Right cardiac atrium (tissue), 5 donors: ENCODE measurements at regions of chr17 and their contacts with region 1.

Region 1: DNA sequence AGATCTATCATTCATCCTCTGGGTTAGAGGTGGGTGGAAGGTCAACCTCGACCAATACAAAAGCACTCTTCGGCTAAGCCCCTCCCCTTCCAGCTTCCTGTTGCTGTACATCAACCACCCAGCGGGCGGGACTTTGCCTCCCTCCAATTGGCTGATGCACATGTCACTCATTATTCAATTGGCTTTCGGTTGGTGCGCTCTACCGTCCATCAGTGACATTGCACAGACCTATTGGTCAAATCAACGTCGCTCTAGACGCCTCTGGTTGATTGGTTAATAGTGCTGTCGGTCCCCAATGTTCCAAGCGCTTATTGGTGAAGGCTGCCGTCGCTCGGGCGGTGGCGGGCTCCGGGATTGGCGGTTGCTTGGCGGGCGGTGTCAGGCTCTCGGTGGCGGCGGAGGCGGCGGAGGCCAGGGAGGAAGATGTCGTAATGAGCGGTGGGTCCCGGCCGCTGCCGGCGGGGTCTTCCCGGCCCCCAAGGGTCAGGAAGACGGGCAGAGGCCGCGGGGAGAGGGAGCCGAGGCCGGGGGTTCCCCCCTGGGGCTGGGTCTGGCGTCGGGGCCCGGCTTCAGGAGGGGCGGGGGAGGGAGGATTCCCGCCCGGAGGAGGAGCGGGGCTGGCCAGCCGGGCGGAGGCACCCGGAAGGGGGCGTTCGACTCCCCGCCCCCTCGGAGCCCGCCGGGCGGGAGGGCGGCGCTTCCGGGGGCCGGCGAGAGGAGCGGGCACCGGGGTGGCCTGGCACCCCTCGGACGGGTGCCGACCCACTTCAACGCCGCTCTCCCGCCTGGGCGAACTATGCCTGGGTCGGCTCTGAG is at the start of gene SP2:
- DNase-seq: peak; percentile 98 to 99 (median 99)
- ATAC-seq: peak; percentile 97
- H3K4me3 ChIP-seq: peak within 1 kb of the TSS; percentile 99
- H3K27ac ChIP-seq: peak within 1 kb of the TSS; percentile 100
- H3K4me1 ChIP-seq: peaks cover 13% of the 10 kb centered on the region
- H3K27me3 ChIP-seq: no peaks in the 10 kb centered on the region
- total RNA-seq, gene SP2: 15.8 to 20.6 (median 17.9) TPM

Region 2: GRCh38 chr17:47941236-47941994 is 45.4 kb after region 1 on chr17 and contains the start of gene PNPO:
- intact Hi-C with region 1: loop called in 3 of 4 experiments (anchors 5 to 10 kb)
- DNase-seq: peak; percentile 94 to 96 (median 95)
- ATAC-seq: peak; percentile 98
- H3K4me3 ChIP-seq: peak within 1 kb of the TSS; percentile 47
- H3K27ac ChIP-seq: peak within 1 kb of the TSS; percentile 8
- H3K4me1 ChIP-seq: peaks cover 3% of the 10 kb centered on the region
- H3K27me3 ChIP-seq: no peaks in the 10 kb centered on the region
- total RNA-seq, gene PNPO: 23.9 to 29.9 (median 26.0) TPM

Region 3: GRCh38 chr17:47949136-47949759 is 53.2 kb after region 1 on chr17:
- intact Hi-C with region 1: loop called (anchors 5 to 10 kb)
- DNase-seq: peak; percentile 92 to 97 (median 97)
- ATAC-seq: peak; percentile 85
- H3K4me3 ChIP-seq: peak overlapping the region; percentile 41
- H3K27ac ChIP-seq: peak overlapping the region; percentile 89
- H3K4me1 ChIP-seq: peaks cover 3% of the 10 kb centered on the region
- H3K27me3 ChIP-seq: no peaks in the 10 kb centered on the region

Region 4: GRCh38 chr17:47957591-47958428 is 61.7 kb after region 1 on chr17 and contains the start of gene PRR15L:
- intact Hi-C with region 1: loop called in 1 of 4 experiments (anchors 10 kb)
- DNase-seq: no peak
- ATAC-seq: no peak
- H3K4me3 ChIP-seq: no peak within 1 kb of the TSS
- H3K27ac ChIP-seq: no peak within 1 kb of the TSS
- H3K4me1 ChIP-seq: no peaks in the 10 kb centered on the region
- H3K27me3 ChIP-seq: no peaks in the 10 kb centered on the region
- total RNA-seq, gene PRR15L: not detected

Region 5: GRCh38 chr17:47970704-47971463 is 74.8 kb after region 1 on chr17 and contains the start of gene CDK5RAP3:
- intact Hi-C with region 1: loop called in 1 of 4 experiments (anchors 5 kb)
- DNase-seq: peak; percentile 100
- ATAC-seq: peak; percentile 99 to 100
- H3K4me3 ChIP-seq: peak within 1 kb of the TSS; percentile 57
- H3K27ac ChIP-seq: peak within 1 kb of the TSS; percentile 21
- H3K4me1 ChIP-seq: no peaks in the 10 kb centered on the region
- H3K27me3 ChIP-seq: no peaks in the 10 kb centered on the region
- total RNA-seq, gene CDK5RAP3: 56.8 to 66.8 (median 64.9) TPM